Common myeloid progenitor, CD34-positive (primary cell): ENCODE measurements at regions of chr16 and their contacts with region 1.

Region 1: GRCh38 chr16:66588981-66589713 is 9.9 kb downstream of the CMTM2 start:
- DNase-seq: peak; percentile 88 to 92 (median 90)
- H3K4me3 ChIP-seq: no peak overlapping the region
- H3K27ac ChIP-seq: no peak overlapping the region
- H3K4me1 ChIP-seq: peaks cover 6 to 65% (median 54%) of the 10 kb centered on the region in 4 experiments
- H3K27me3 ChIP-seq: no peaks in the 10 kb centered on the region

Region 2: DNA sequence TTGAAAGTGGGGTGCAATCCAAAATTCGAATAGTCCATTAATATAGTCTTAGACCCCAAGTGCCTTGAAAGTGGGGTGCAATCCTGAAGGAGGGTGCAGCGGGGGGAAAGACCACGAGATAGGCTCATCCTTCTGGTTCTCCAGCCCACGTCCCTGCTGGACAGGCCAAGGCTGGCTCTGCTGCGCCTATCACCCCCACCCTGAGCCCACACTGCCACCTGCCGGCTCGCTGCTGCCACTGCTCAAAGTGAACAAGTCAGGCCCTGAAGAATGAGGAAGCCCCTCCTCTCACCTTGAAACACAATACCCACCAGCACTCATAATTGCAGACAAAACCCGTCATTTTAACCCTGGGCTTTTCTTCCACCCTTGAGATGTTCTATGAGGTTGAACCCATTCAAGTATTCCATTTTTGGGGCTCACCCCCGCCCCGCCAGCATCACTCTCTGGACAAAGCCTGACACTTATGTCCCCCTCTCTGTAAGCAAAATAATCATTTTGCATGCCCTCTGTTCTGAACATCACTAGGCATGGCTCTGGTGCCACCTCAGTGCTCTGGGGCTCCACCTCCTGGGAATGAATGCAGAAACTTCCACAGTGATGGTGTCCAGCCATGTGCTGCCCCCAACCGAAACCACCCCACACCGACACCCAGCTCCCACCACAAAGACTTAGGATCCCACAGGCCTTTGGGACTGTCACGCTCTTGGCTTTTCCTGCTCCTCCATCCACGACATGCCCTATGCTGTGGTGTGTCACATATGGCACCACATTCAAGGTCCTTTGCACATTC is 105.3 kb before region 1 on chr16:
- CTCF ChIA-PET with region 1: interaction called, 78 read pairs
- POLR2A ChIA-PET with region 1: no interaction called
- DNase-seq: peak; percentile 69 to 82 (median 79)
- H3K4me3 ChIP-seq: no peak overlapping the region
- H3K27ac ChIP-seq: no peak overlapping the region
- H3K4me1 ChIP-seq: peaks cover 3 to 21% (median 14%) of the 10 kb centered on the region in 4 experiments
- H3K27me3 ChIP-seq: no peaks in the 10 kb centered on the region

Region 3: DNA sequence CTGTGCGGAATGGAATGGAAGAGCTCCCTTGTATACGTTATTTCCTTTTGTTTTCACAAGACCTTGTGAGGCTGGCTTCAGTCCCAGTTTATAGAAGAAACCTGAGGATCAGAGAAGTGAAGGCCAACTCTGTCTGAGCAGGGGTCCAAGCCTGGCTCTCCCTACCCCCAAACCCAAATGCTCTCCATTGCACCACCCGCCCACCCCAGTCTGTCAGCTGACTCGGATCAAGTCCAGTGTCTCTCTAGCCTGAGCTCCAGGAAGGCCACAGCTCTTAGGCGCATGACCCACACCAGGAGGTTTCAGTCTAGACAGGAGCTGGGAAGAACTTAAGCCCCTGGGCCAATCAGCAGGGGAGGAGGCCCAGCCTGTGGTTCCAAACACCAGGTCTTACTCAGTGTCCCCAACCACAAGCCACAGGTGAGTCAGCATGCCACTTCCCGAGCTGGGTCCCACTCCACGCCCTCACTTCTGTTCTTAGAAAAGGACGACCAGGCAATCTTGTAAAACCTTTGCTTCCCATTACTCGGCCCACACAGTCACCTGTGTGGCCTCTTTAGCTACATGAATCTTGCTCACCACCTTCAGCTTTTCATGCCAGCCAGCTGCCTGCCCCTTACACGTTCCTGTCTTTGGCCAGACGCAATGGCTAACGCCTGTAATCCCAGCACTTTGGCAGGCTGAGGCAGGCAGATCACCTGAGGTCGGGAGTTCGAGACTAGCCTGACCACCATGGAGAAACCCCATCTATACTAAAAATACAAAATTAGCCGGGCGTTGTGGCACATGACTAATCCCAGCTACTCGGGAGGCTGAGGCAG is 67.0 kb before region 1 on chr16:
- CTCF ChIA-PET with region 1: interaction called, 59 read pairs
- POLR2A ChIA-PET with region 1: interaction called, 4 read pairs
- DNase-seq: peak; percentile 87 to 96 (median 94)
- H3K4me3 ChIP-seq: peak overlapping the region in 4 of 7 experiments; percentile 2 to 41 (median 31)
- H3K27ac ChIP-seq: peak overlapping the region in 1 of 2 experiments; percentile 68
- H3K4me1 ChIP-seq: peaks cover 50 to 96% (median 93%) of the 10 kb centered on the region in 4 experiments
- H3K27me3 ChIP-seq: no peaks in the 10 kb centered on the region

Region 4: GRCh38 chr16:66562407-66562806 is 26.7 kb before region 1 on chr16:
- CTCF ChIA-PET with region 1: interaction called, 21 read pairs
- POLR2A ChIA-PET with region 1: no interaction called
- DNase-seq: no peak
- H3K4me3 ChIP-seq: no peak overlapping the region
- H3K27ac ChIP-seq: no peak overlapping the region
- H3K4me1 ChIP-seq: peaks cover 24 to 44% (median 38%) of the 10 kb centered on the region in 4 experiments
- H3K27me3 ChIP-seq: no peaks in the 10 kb centered on the region

Region 5: GRCh38 chr16:66608241-66609138 is 19.3 kb after region 1 on chr16:
- CTCF ChIA-PET with region 1: interaction called, 13 read pairs
- POLR2A ChIA-PET with region 1: no interaction called
- DNase-seq: peak; percentile 87 to 91 (median 91)
- H3K4me3 ChIP-seq: no peak overlapping the region
- H3K27ac ChIP-seq: peak overlapping the region in 1 of 2 experiments; percentile 59
- H3K4me1 ChIP-seq: peaks cover 0 to 44% (median 38%) of the 10 kb centered on the region in 4 experiments
- H3K27me3 ChIP-seq: no peaks in the 10 kb centered on the region